ENCODE measurements at regions of chr21 and their contacts with region 1.

Region 1: DNA sequence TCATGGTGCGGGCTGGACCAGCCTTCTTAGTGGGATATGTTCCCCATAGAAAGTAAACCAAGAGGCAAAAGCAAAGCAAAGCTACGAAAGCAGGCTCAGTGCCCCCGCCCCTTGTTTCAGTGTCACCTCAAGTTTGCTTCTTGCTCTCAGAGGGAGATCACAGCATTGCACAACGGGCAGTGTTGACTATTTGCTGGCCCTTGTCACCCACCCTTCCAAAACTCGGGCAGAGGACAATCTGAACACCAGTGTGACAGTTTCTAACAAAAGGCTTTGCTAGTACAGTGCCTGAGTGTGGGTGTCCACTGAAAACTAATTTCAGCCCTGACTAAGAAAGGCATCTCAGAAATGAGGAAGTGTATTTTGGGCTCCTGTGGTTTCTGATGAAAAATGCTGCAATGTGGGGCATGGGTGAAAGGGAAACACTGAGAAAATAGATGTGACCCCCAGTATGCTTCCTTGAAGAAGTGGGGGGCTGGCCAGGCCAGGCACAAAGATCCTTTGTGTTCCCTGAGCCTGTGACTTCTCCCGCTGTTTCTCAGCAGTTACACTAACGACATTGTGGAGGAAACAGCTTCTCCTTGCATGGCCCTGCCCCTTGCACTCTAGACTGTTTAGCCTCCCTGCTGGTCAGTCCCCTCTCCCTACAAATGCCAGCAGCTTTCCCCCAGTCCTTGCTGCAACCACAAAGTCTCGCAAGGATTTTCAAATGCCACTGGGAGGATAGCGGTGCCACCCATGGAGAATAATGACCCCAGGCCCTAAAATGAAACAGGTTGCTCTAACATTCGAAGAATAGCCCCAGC is 33.3 kb upstream of the KCNE1 start:
- DNase-seq: no peak

Region 2: GRCh38 chr21:33769057-33769456 is 776.2 kb before region 1 on chr21:
- intact Hi-C with region 1: no loop called
- DNase-seq: no peak

Region 3: GRCh38 chr21:34526618-34527290 is 18.5 kb before region 1 on chr21:
- intact Hi-C with region 1: loop called (anchors 1 kb)
- DNase-seq: peak; percentile 88

Measured in cardiac septum (tissue), 1 donor.